Heart right ventricle (tissue), 16 donors: ENCODE measurements at regions of chr15 and their contacts with region 1.

Region 1: DNA sequence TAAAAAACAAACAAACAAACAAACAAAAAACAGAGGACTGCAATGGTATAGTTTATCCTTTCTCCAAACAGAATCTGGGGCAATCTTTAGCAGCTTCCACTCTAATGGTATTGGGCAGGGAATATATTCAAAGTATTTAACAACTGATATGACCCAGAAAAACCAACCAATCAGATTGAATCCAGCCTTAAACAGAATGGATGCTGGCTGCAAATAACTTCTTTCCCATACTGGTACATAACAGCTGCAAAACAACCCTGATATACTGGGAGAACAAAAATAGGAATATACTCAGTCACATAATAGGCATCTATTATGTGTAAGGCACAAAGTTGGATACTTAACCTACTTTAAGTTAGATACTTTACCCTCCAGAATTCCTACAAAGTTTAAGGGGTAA is 49.1 kb downstream of the UBR1 start:
- DNase-seq: no peak
- ATAC-seq: no peak
- H3K4me3 ChIP-seq: no peak overlapping the region
- H3K27ac ChIP-seq: no peak overlapping the region
- H3K4me1 ChIP-seq: peaks cover 0 to 7% (median 0%) of the 10 kb centered on the region in 9 donors
- H3K27me3 ChIP-seq: no peaks in the 10 kb centered on the region
- CTCF ChIP-seq: no peak

Region 2: GRCh38 chr15:42710662-42711061 is 346.0 kb before region 1 on chr15:
- intact Hi-C with region 1: loop called in 1 of 10 experiments (anchors 5 kb)
- DNase-seq: no peak
- ATAC-seq: peak in 5 of 8 donors; percentile 33 to 76 (median 54)
- H3K4me3 ChIP-seq: no peak overlapping the region
- H3K27ac ChIP-seq: no peak overlapping the region
- H3K4me1 ChIP-seq: peaks cover 0 to 5% (median 0%) of the 10 kb centered on the region in 9 donors
- H3K27me3 ChIP-seq: no peaks in the 10 kb centered on the region
- CTCF ChIP-seq: no peak

Region 3: DNA sequence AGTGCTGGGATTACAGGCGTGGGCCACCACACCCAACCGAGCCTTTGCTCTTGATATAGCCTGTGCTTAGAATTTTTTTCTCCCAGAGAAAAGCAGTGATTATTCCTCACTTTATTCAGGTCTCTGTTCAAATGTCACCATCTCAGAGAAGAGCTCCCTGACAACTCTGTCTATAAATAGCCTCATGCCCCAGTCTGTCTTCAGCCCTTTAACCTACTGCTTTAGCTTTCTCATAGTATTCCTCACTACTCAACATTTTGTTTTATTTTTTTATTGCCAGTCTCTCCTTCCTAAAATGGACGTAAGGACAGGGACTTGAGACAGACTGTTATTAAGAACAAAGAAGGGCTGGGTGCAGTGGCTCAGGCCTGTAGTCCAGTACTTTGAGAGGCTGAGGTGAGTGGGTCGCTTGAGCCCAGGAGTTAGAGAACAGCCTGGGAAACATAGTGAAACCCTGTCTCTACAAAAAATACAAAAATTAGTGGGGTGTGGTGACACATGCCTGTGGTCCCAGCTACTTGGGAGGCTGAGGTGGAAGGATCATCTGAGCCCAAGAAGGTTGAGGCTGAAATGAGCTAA is 57.4 kb before region 1 on chr15:
- intact Hi-C with region 1: no loop called
- DNase-seq: no peak
- ATAC-seq: peak in 4 of 8 donors; percentile 61 to 74 (median 66)
- H3K4me3 ChIP-seq: no peak overlapping the region
- H3K27ac ChIP-seq: peak overlapping the region in 3 of 10 donors; percentile 16 to 66 (median 25)
- H3K4me1 ChIP-seq: peaks cover 0 to 6% (median 0%) of the 10 kb centered on the region in 9 donors
- H3K27me3 ChIP-seq: no peaks in the 10 kb centered on the region
- CTCF ChIP-seq: no peak

Region 4: DNA sequence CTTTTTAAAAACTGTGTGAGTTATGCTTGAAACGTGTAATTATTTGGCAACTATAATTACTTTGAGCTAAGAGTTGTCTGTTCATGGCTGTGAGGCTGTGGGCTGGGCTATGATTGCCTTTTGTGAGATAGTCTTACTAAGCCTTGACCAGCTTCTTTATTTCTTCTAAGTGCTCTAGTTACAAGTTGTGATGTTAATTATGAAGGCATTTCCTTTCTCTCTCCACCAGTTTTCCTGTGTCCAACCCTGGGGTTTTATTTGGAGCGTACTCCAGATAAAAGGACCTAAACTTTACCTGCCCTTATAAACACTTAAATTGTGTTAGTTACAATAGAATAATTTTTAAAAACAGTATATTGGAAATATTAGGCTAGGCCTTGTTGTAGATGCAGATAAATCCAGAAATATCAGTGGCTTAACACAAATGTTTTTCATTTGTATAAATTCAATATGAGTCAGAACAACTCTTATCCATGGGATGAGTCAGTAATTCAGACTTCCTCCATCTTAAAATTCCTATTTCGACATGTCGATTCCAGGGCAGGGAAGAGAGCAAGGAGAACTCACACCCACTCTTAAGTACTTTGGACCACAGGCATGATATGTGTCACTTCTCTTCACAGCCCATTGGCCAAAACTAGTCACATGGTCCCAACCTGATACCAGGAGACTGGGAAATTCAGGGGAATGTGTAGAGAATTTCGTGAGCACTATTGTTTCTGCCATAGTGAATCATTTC is 93.7 kb after region 1 on chr15:
- intact Hi-C with region 1: loop called in 1 of 10 experiments (anchors 10 kb)
- DNase-seq: no peak
- ATAC-seq: no peak
- H3K4me3 ChIP-seq: no peak overlapping the region
- H3K27ac ChIP-seq: peak overlapping the region in 1 of 10 donors; percentile 45
- H3K4me1 ChIP-seq: peaks cover 0 to 7% (median 0%) of the 10 kb centered on the region in 9 donors
- H3K27me3 ChIP-seq: no peaks in the 10 kb centered on the region
- CTCF ChIP-seq: no peak

Region 5: GRCh38 chr15:43347114-43347513 is 290.4 kb after region 1 on chr15:
- intact Hi-C with region 1: no loop called
- DNase-seq: no peak
- ATAC-seq: no peak
- H3K4me3 ChIP-seq: no peak overlapping the region
- H3K27ac ChIP-seq: no peak overlapping the region
- H3K4me1 ChIP-seq: peaks cover 0 to 1% (median 0%) of the 10 kb centered on the region in 9 donors
- H3K27me3 ChIP-seq: no peaks in the 10 kb centered on the region
- CTCF ChIP-seq: no peak